HepG2 (cell line): ENCODE measurements at regions of chr10 and their contacts with region 1.

Region 1: DNA sequence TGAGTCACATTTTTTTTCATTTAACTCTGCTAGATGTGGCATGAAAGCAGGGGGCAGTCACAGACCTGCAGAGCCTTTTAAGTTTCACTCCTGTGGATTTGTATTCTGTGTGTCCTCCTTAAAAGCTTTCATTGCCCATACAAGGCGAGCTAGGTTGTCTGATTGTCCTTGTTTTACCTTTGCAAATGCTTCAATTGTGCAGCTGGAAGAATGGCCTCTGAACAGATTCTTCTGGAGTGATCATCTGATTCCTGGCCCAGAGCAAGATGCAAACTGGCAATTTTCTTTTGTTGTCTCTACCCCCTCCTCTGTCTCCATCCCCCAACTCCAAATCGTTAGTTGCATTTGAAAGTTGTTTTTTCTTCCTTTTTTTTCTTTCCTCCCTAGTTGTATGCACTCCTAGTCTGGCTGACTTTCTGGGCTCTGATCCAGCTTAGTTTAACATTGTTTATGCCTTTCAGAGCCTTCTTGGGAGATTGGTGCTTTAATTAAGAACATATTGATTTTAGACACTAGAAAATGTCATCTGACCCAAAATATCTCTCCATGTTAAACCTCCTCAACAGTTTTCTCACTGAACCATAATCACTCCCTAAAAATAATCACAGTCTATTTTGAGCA is 150.2 kb downstream of the REEP3 start:
- DNase-seq: no peak
- ATAC-seq: no peak
- H3K4me3 ChIP-seq: no peak overlapping the region
- H3K27ac ChIP-seq: no peak overlapping the region
- H3K4me1 ChIP-seq: no peaks in the 10 kb centered on the region
- H3K27me3 ChIP-seq: no peaks in the 10 kb centered on the region
- CTCF ChIP-seq: no peak
- EP300 ChIP-seq: no peak
- POLR2A ChIP-seq: no peak
- RAD21 ChIP-seq: no peak

Region 2: GRCh38 chr10:63562857-63563256 is 108.6 kb before region 1 on chr10:
- CTCF ChIA-PET with region 1: no interaction called
- POLR2A ChIA-PET with region 1: no interaction called
- in situ Hi-C with region 1: no loop called
- intact Hi-C with region 1: no loop called
- DNase-seq: no peak
- ATAC-seq: no peak
- H3K4me3 ChIP-seq: no peak overlapping the region
- H3K27ac ChIP-seq: no peak overlapping the region
- H3K4me1 ChIP-seq: no peaks in the 10 kb centered on the region; the same call in 1 of the 2 replicates
- H3K27me3 ChIP-seq: no peaks in the 10 kb centered on the region
- CTCF ChIP-seq: no peak
- EP300 ChIP-seq: no peak
- POLR2A ChIP-seq: no peak
- RAD21 ChIP-seq: no peak

Region 3: GRCh38 chr10:63684257-63684936 is 13.0 kb after region 1 on chr10:
- CTCF ChIA-PET with region 1: no interaction called
- POLR2A ChIA-PET with region 1: no interaction called
- in situ Hi-C with region 1: no loop called
- intact Hi-C with region 1: loop called (anchors 1 kb)
- DNase-seq: no peak
- ATAC-seq: no peak
- H3K4me3 ChIP-seq: no peak overlapping the region
- H3K27ac ChIP-seq: no peak overlapping the region
- H3K4me1 ChIP-seq: no peaks in the 10 kb centered on the region
- H3K27me3 ChIP-seq: no peaks in the 10 kb centered on the region
- CTCF ChIP-seq: no peak
- EP300 ChIP-seq: no peak
- POLR2A ChIP-seq: no peak
- RAD21 ChIP-seq: no peak